Activated CD4-positive, alpha-beta memory T cell treated with anti-CD3 and anti-CD28 coated beads, Interleukin-2, amount 10 ng/mL, durations not matched to agents 7 days and 5 days (primary cell): ENCODE measurements at regions of chr9 and their contacts with region 1.

Region 1: GRCh38 chr9:122498883-122499288 is 11.7 kb upstream of the OR1J2 start:
- DNase-seq: peak; percentile 26
- H3K4me3 Mint-ChIP-seq: no peak overlapping the region
- H3K27ac Mint-ChIP-seq: no peak overlapping the region
- H3K4me1 Mint-ChIP-seq: no peaks in the 10 kb centered on the region
- H3K27me3 Mint-ChIP-seq: peaks cover 28% of the 10 kb centered on the region

Region 2: GRCh38 chr9:122370869-122371755 is 127.8 kb before region 1 on chr9 and contains the start of gene PTGS1:
- CTCF ChIA-PET with region 1: no interaction called
- POLR2A ChIA-PET with region 1: no interaction called
- DNase-seq: no peak
- H3K4me3 Mint-ChIP-seq: peak within 1 kb of the TSS; percentile 22
- H3K27ac Mint-ChIP-seq: no peak within 1 kb of the TSS
- H3K4me1 Mint-ChIP-seq: peaks cover 6% of the 10 kb centered on the region
- H3K27me3 Mint-ChIP-seq: peaks cover 23% of the 10 kb centered on the region
- total RNA-seq, gene PTGS1: 0.08 to 0.20 TPM

Region 3: DNA sequence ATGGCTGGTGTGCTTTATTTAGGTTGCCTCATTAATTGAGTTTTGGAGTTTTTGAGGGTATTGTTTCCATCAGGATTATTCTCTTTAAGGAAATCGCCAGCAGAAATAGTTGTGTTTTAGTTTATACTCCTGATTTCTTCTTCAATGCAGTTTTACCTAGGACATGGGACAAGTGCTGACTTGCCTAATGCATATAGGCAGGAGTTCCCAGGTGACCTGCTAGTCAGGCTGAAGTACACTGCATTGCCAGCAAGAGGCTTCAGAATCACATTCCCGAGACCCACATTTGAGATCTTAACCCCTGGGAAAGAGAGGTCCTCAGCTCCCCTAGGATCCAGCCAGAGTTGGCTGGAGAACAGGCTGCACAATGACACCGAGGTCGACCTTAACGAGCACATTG is 52.5 kb after region 1 on chr9:
- CTCF ChIA-PET with region 1: no interaction called
- POLR2A ChIA-PET with region 1: no interaction called
- DNase-seq: no peak
- H3K4me3 Mint-ChIP-seq: no peak overlapping the region
- H3K27ac Mint-ChIP-seq: no peak overlapping the region
- H3K4me1 Mint-ChIP-seq: no peaks in the 10 kb centered on the region
- H3K27me3 Mint-ChIP-seq: peaks cover 6% of the 10 kb centered on the region

Region 4: GRCh38 chr9:122810306-122810946 is 311.5 kb after region 1 on chr9:
- CTCF ChIA-PET with region 1: interaction called, 13 read pairs
- POLR2A ChIA-PET with region 1: no interaction called
- DNase-seq: peak; percentile 79
- H3K4me3 Mint-ChIP-seq: no peak overlapping the region
- H3K27ac Mint-ChIP-seq: no peak overlapping the region
- H3K4me1 Mint-ChIP-seq: peaks cover 28% of the 10 kb centered on the region
- H3K27me3 Mint-ChIP-seq: no peaks in the 10 kb centered on the region